Activated CD4-positive, alpha-beta T cell treated with anti-CD3 and anti-CD28 coated beads for 36 hours (primary cell): ENCODE measurements at regions of chr2 and their contacts with region 1.

Region 1: GRCh38 chr2:37683921-37684780 is 12.7 kb upstream of the CDC42EP3 start:
- DNase-seq: no peak
- ATAC-seq: peak; percentile 95
- H3K4me3 Mint-ChIP-seq: peak overlapping the region; percentile 32
- H3K27ac Mint-ChIP-seq: peak overlapping the region; percentile 95
- H3K4me1 Mint-ChIP-seq: peaks cover 48% of the 10 kb centered on the region
- H3K27me3 Mint-ChIP-seq: no peaks in the 10 kb centered on the region

Region 2: DNA sequence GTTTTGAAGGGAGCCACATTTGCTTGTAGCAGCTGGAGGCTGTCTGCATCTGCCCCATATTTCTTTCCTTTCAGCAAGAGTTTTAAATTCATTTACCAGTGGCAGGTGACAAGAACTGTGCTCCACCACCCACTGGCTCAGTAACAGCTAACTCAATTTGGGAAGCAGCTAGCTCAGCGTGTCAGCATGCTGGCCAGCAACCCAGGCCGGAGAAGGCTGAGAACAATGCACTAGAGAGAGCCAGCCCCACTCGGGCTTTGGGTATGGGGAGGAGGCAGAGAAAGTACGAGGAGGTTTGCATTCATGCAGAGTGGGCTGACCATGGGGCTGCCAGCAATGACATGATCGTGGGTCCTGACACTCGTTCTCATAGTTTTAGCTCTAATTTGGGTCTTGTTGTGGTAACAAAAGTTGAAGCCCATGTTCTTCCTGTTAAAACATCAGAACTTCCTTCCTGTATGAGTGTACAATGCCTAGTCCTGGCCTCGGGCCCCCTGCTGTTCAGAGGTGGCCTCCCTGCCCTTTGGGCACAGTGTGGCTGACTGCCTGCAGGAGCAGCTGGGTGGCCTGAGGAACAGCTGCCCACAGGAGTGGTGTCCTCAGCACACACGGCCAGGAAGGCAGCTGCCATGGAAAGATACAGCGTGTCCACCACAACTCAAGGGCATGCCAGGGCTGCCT is 35.7 kb before region 1 on chr2:
- CTCF ChIA-PET with region 1: no interaction called
- POLR2A ChIA-PET with region 1: no interaction called
- intact Hi-C with region 1: loop called in 1 of 2 experiments (anchors 2 kb)
- DNase-seq: peak; percentile 58
- ATAC-seq: peak; percentile 77
- H3K4me3 Mint-ChIP-seq: no peak overlapping the region
- H3K27ac Mint-ChIP-seq: peak overlapping the region; percentile 88
- H3K4me1 Mint-ChIP-seq: peaks cover 89% of the 10 kb centered on the region
- H3K27me3 Mint-ChIP-seq: no peaks in the 10 kb centered on the region

Region 3: GRCh38 chr2:37659723-37660122 is 24.4 kb before region 1 on chr2:
- CTCF ChIA-PET with region 1: no interaction called
- POLR2A ChIA-PET with region 1: no interaction called
- intact Hi-C with region 1: no loop called
- DNase-seq: no peak
- ATAC-seq: no peak
- H3K4me3 Mint-ChIP-seq: no peak overlapping the region
- H3K27ac Mint-ChIP-seq: peak overlapping the region; percentile 43
- H3K4me1 Mint-ChIP-seq: peaks cover 84% of the 10 kb centered on the region
- H3K27me3 Mint-ChIP-seq: no peaks in the 10 kb centered on the region

Region 4: GRCh38 chr2:37730037-37730818 is 46.1 kb after region 1 on chr2:
- CTCF ChIA-PET with region 1: no interaction called
- POLR2A ChIA-PET with region 1: no interaction called
- intact Hi-C with region 1: no loop called
- DNase-seq: no peak
- ATAC-seq: peak; percentile 97
- H3K4me3 Mint-ChIP-seq: no peak overlapping the region
- H3K27ac Mint-ChIP-seq: no peak overlapping the region
- H3K4me1 Mint-ChIP-seq: peaks cover 7% of the 10 kb centered on the region
- H3K27me3 Mint-ChIP-seq: no peaks in the 10 kb centered on the region